Activated CD4-positive, alpha-beta T cell treated with anti-CD3 and anti-CD28 coated beads, Interleukin-2, amount 10 ng/mL, durations not matched to agents 24 days and 14 days (primary cell): ENCODE measurements at regions of chr10 and their contacts with region 1.

Region 1: GRCh38 chr10:6108603-6109443 is 20.0 kb downstream of the RBM17 start:
- DNase-seq: peak; percentile 82
- H3K4me3 Mint-ChIP-seq: no peak overlapping the region
- H3K27ac Mint-ChIP-seq: peak overlapping the region; percentile 71
- H3K4me1 Mint-ChIP-seq: peaks cover 35% of the 10 kb centered on the region
- H3K27me3 Mint-ChIP-seq: no peaks in the 10 kb centered on the region

Region 2: DNA sequence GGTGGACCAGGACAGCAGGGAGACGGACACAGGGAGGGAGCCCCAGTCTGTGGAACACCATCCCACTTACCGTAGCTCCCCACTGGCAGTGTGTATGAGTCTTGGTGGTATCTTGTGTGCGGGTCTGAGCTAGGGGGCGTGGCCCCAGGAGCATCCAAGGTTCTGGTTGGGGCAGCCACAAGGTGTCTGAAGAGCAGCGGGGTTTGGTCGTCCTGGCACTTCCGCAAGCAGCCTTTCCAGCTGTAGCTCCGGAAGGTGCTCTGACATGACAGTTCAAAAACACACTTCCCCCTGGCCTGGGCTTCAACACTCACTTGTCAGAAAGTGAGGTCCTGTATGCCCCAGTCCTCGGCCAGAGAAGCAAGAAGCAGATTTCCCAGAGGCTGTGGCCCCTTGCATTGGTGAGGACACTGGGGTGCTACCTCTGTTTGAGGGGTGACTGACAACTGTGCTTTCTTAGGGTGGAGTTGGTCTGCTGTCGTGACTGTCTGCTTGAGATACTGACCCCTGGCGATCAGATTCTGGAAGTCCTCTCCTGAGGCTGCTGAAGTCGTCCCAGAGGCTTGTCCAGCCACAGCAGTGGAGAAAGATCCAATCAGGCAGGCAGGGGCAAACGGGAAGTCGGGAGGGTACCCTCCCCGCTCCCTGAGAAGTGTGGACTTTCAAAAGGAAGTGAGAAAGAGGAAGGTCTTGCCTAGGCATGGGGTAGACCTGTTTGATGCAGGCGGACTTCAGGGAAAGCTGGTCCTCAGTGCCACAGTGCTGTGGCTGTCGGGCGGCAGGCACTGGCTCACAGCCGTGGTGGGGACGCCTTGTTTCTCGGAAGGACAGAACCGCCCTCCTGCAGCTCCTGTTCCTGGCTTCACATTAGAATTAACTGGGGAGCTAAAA is 42.5 kb after region 1 on chr10:
- intact Hi-C with region 1: loop called (anchors 1 kb)
- DNase-seq: peak; percentile 88
- H3K4me3 Mint-ChIP-seq: peak overlapping the region; percentile 72
- H3K27ac Mint-ChIP-seq: peak overlapping the region; percentile 64
- H3K4me1 Mint-ChIP-seq: peaks cover 53% of the 10 kb centered on the region
- H3K27me3 Mint-ChIP-seq: no peaks in the 10 kb centered on the region

Region 3: DNA sequence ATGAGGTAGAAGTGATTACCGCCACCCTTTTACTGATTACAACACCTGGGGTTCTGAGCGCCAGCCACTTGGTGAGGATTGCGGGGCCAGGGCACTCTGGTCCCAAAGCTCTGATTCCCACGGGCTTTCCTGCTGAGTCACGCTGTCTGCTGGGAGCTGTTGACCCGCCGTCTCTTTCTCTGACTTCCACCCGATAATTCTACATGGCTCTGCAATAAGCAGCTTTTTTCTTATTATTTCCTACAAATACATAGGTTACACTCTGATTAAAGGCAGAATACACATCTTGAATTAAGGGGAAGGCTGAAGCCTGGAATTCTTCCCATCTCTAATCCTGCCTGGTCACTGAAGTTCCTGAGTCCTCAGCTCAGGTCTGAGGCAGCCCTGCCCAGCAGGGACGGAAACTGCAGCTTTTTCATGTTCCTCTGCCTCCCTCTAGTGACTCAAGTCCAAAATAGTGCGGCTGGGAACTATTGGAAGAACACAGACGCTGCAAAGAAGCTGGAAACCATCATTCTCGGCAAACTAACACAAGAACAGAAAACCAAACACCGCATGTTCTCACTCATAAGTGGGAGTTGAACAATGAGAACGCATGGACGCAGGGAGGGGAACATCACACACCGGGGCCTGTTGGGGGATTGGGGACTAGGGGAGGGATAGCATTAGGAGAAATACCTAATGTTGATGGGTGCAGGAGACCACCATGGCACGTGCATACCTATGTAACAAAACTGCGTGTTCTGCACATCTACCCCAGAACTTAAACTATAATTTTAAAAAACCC is 292.9 kb after region 1 on chr10:
- intact Hi-C with region 1: loop called (anchors 1 kb)
- DNase-seq: peak; percentile 90
- H3K4me3 Mint-ChIP-seq: peak overlapping the region; percentile 24
- H3K27ac Mint-ChIP-seq: peak overlapping the region; percentile 16
- H3K4me1 Mint-ChIP-seq: peaks cover 27% of the 10 kb centered on the region
- H3K27me3 Mint-ChIP-seq: peaks cover 3% of the 10 kb centered on the region